Common myeloid progenitor, CD34-positive (primary cell): ENCODE measurements at regions of chr9 and their contacts with region 1.

Region 1: DNA sequence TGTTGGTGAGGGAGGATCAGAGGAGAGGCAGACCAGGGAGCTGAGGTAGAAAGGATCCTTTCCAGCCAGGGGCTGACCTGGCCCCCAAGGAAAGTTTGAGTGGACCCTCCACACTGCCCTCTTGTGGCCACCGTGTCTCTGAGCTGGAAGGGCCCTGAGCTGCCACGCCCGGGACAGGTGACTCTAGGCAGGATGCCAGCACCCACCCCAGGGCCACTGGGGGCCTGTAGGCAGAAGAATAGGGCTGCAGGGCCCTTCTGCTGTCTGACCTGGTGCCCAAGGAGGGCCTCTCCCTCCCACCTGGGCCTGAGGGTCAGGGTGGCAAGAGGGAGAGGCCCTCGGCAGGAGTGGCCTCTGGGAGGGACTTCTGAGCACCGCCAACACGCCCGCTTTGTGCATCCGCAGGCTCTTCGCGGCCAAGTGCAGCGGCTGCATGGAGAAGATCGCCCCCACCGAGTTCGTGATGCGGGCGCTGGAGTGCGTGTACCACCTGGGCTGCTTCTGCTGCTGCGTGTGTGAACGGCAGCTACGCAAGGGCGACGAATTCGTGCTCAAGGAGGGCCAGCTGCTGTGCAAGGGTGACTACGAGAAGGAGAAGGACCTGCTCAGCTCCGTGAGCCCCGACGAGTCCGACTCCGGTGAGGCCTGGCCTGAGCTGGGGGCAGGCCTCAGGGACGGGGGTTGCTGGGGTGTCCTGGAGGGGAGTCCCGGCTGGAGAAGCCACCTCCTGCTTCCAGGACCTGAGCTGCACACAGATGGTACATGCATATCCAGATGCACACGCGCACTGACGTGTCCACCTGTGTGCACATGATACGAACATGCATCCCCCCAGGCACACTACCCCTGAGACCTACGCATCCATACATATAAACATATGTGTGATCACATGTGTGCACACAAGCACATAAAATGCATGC is 77.0 kb downstream of the LMX1B start:
- DNase-seq: peak; percentile 36 to 64 (median 52)
- H3K4me3 ChIP-seq: no peak overlapping the region
- H3K27ac ChIP-seq: no peak overlapping the region
- H3K4me1 ChIP-seq: no peaks in the 10 kb centered on the region
- H3K27me3 ChIP-seq: peaks cover 1 to 53% (median 9%) of the 10 kb centered on the region in 5 experiments

Region 2: GRCh38 chr9:126611592-126612325 is 78.9 kb before region 1 on chr9:
- CTCF ChIA-PET with region 1: interaction called, 21 read pairs
- POLR2A ChIA-PET with region 1: no interaction called
- DNase-seq: peak; percentile 62 to 77 (median 74)
- H3K4me3 ChIP-seq: peak overlapping the region in 2 of 7 experiments; percentile 26 to 37
- H3K27ac ChIP-seq: no peak overlapping the region
- H3K4me1 ChIP-seq: peaks cover 0 to 48% (median 27%) of the 10 kb centered on the region in 4 experiments
- H3K27me3 ChIP-seq: peaks cover 0 to 95% (median 34%) of the 10 kb centered on the region in 5 experiments

Region 3: DNA sequence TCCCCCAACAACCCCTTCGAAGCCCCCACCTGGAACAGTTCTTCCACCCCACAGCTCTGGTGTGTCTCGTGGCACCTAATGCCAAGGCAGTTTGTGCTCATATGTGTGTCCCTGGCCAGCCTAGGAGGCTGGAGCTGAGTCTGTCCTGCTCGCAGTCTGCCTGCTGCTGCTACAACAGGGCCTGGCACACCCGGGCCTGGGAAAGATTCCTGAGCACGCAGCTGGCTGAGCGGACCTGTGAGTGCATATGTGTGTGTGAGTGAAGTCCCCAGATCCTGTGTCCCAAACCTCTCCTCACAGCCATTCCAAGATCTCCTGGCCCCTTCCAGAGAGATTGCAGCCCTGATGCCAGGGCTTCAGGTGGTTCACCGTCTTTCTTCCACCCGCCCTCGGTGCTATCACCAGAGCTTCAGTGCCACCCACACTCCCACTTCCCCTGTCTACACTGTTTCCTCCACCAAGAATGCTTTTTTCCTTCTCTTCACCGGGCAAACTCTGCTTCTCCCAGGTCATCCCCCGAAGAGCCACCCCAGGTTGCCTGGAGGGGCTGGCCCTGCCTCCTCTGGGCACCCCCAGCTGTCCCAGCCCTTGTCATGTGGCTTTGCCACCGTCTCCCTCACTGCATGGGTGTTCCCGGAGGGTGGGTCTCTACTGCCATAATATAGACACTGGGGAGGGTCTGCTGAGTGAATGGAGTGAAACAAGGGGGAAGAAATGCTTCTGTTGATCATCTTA is 48.5 kb before region 1 on chr9:
- CTCF ChIA-PET with region 1: interaction called, 12 read pairs
- POLR2A ChIA-PET with region 1: no interaction called
- DNase-seq: no peak
- H3K4me3 ChIP-seq: no peak overlapping the region
- H3K27ac ChIP-seq: no peak overlapping the region
- H3K4me1 ChIP-seq: peaks cover 0 to 3% (median 1%) of the 10 kb centered on the region in 4 experiments
- H3K27me3 ChIP-seq: peaks cover 0 to 99% (median 60%) of the 10 kb centered on the region in 5 experiments

Region 4: GRCh38 chr9:126676685-126677143 is 14.0 kb before region 1 on chr9:
- CTCF ChIA-PET with region 1: interaction called, 24 read pairs
- POLR2A ChIA-PET with region 1: no interaction called
- DNase-seq: peak in 1 of 3 donors; percentile 38
- H3K4me3 ChIP-seq: no peak overlapping the region
- H3K27ac ChIP-seq: no peak overlapping the region
- H3K4me1 ChIP-seq: peaks cover 0 to 6% (median 1%) of the 10 kb centered on the region in 4 experiments
- H3K27me3 ChIP-seq: peaks cover 12 to 97% (median 44%) of the 10 kb centered on the region in 5 experiments